ENCODE measurements at regions of chr6 and their contacts with region 1.

Region 1: GRCh38 chr6:31619805-31620585 is 520 bp upstream of the PRRC2A start:
- DNase-seq: peak; percentile 96
- ATAC-seq: peak; percentile 89
- H3K4me3 ChIP-seq: peak overlapping the region; percentile 70
- H3K27ac ChIP-seq: peak overlapping the region; percentile 98
- H3K4me1 ChIP-seq: peaks cover 21% of the 10 kb centered on the region
- H3K27me3 ChIP-seq: no peaks in the 10 kb centered on the region
- CTCF ChIP-seq: no peak
- EP300 ChIP-seq: peak in 1 of 2 experiments; percentile 35; a peak in 1 of 4 replicates
- POLR2A ChIP-seq: peak; percentile 92
- RAD21 ChIP-seq: no peak

Region 2: DNA sequence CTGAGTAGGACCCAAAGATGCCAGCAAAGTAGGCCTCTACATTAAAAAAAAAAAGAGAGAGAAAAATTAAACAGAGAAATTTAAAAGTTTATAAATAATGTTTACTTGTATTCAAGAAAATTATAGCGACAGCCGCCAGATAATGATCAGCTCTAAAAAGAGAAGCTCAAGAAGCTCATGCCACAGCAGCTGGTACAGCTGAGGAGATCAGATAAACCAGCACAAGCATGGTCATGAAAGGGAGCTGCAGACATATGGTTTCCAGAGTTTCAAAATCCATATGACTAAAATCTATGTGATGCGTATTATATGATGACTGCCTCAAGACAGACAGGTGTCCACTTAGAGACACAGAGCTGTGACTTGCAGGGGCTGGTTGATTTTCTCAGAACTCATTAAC is 334.5 kb before region 1 on chr6:
- CTCF ChIA-PET with region 1: no interaction called
- POLR2A ChIA-PET with region 1: no interaction called
- RAD21 ChIA-PET with region 1: no interaction called
- SMC1A ChIA-PET with region 1: no interaction called
- in situ Hi-C with region 1: no loop called
- intact Hi-C with region 1: no loop called
- DNase-seq: no peak
- ATAC-seq: no peak
- H3K4me3 ChIP-seq: no peak overlapping the region
- H3K27ac ChIP-seq: no peak overlapping the region
- H3K4me1 ChIP-seq: no peaks in the 10 kb centered on the region
- H3K27me3 ChIP-seq: no peaks in the 10 kb centered on the region
- CTCF ChIP-seq: no peak
- EP300 ChIP-seq: no peak
- POLR2A ChIP-seq: no peak
- RAD21 ChIP-seq: no peak

Region 3: GRCh38 chr6:31446481-31446880 is 173.5 kb before region 1 on chr6:
- CTCF ChIA-PET with region 1: no interaction called
- POLR2A ChIA-PET with region 1: no interaction called
- RAD21 ChIA-PET with region 1: no interaction called
- SMC1A ChIA-PET with region 1: no interaction called
- in situ Hi-C with region 1: no loop called
- intact Hi-C with region 1: no loop called
- DNase-seq: no peak
- ATAC-seq: no peak
- H3K4me3 ChIP-seq: no peak overlapping the region
- H3K27ac ChIP-seq: no peak overlapping the region
- H3K4me1 ChIP-seq: no peaks in the 10 kb centered on the region
- H3K27me3 ChIP-seq: no peaks in the 10 kb centered on the region; a peak in 1 of 4 replicates
- CTCF ChIP-seq: no peak
- EP300 ChIP-seq: no peak
- POLR2A ChIP-seq: no peak
- RAD21 ChIP-seq: no peak

Region 4: DNA sequence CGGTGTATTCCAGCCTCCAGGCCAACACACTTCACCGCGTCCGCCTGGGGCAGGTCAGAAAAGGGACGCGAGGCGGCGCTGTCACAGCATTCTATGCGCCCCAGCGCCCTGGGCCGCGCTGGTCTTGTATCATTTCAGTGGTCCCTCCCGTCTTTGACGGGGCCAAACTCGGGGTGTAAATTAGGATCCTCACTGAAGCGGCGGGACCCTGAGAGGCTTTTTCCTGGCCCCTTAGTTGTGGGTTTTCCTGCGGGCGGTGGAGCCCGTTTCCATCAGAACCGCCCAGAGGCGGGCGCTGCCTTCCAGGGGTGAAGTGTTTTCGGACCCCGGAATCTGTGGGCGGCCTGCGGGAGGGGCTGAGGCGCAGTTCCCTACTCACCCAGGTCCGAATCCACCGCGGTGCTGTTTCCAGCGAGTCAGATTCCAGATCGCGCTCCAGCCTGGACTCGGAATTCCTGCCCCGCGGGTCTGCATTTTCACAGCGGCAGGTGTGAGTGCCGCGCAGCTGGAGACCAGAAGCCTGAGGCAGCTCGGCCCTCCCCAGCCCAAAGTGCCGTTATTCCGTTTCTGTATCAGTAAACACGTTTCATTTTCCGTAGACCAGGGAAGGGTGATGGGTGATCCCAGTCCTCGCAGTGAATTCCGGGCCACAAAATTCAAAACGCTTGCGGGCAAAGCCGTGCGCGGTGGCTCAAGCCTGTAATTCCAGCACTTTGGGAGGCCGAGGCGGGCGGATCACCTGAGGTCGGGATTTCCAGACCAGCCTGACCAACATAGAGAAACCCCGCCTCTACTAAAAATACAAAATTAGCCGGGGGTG is 125.9 kb before region 1 on chr6:
- CTCF ChIA-PET with region 1: no interaction called
- POLR2A ChIA-PET with region 1: interaction called, 5 read pairs
- RAD21 ChIA-PET with region 1: no interaction called
- SMC1A ChIA-PET with region 1: no interaction called
- in situ Hi-C with region 1: no loop called
- intact Hi-C with region 1: loop called (anchors 5 kb)
- DNase-seq: peak; percentile 34
- ATAC-seq: peak; percentile 73
- H3K4me3 ChIP-seq: peak overlapping the region; percentile 76
- H3K27ac ChIP-seq: peak overlapping the region; percentile 65
- H3K4me1 ChIP-seq: 0 out of 2 replicates have a peak, but pooled peaks cover 2% of the 10 kb centered on the region
- H3K27me3 ChIP-seq: no peaks in the 10 kb centered on the region
- CTCF ChIP-seq: peak; percentile 72 to 94 (median 85)
- EP300 ChIP-seq: no peak
- POLR2A ChIP-seq: 0 out of 2 replicates have a peak, but pooled peaks have one; percentile 23
- RAD21 ChIP-seq: peak; percentile 72

Region 5: GRCh38 chr6:31575335-31575901 is 44.6 kb before region 1 on chr6 and contains the start of gene TNF:
- CTCF ChIA-PET with region 1: interaction called, 5 read pairs
- POLR2A ChIA-PET with region 1: interaction called, 10 read pairs
- RAD21 ChIA-PET with region 1: interaction called, 5 read pairs
- SMC1A ChIA-PET with region 1: interaction called, 5 read pairs
- in situ Hi-C with region 1: no loop called
- intact Hi-C with region 1: no loop called
- DNase-seq: peak; percentile 91
- ATAC-seq: peak; percentile 44
- H3K4me3 ChIP-seq: peak within 1 kb of the TSS; percentile 91
- H3K27ac ChIP-seq: peak within 1 kb of the TSS; percentile 96
- H3K4me1 ChIP-seq: peaks cover 57% of the 10 kb centered on the region
- H3K27me3 ChIP-seq: no peaks in the 10 kb centered on the region
- CTCF ChIP-seq: no peak
- EP300 ChIP-seq: no peak
- POLR2A ChIP-seq: peak; percentile 99
- RAD21 ChIP-seq: 0 out of 2 replicates have a peak, but pooled peaks have one; percentile 12
- polyA plus RNA-seq, gene TNF: 18.0 to 30.2 TPM

Region 6: GRCh38 chr6:31588871-31589650 is 30.9 kb before region 1 on chr6:
- CTCF ChIA-PET with region 1: interaction called, 3 read pairs
- POLR2A ChIA-PET with region 1: interaction called, 19 read pairs
- RAD21 ChIA-PET with region 1: no interaction called
- SMC1A ChIA-PET with region 1: interaction called, 6 read pairs
- in situ Hi-C with region 1: no loop called
- intact Hi-C with region 1: no loop called
- DNase-seq: no peak
- ATAC-seq: no peak
- H3K4me3 ChIP-seq: no peak overlapping the region
- H3K27ac ChIP-seq: no peak overlapping the region; the same call in 1 of the 2 replicates
- H3K4me1 ChIP-seq: peaks cover 55% of the 10 kb centered on the region
- H3K27me3 ChIP-seq: no peaks in the 10 kb centered on the region
- CTCF ChIP-seq: no peak
- EP300 ChIP-seq: no peak
- POLR2A ChIP-seq: no peak
- RAD21 ChIP-seq: no peak

Region 7: GRCh38 chr6:31652925-31653718 is 33.1 kb after region 1 on chr6:
- CTCF ChIA-PET with region 1: interaction called, 7 read pairs
- POLR2A ChIA-PET with region 1: interaction called, 58 read pairs
- RAD21 ChIA-PET with region 1: interaction called, 11 read pairs
- SMC1A ChIA-PET with region 1: interaction called, 15 read pairs
- in situ Hi-C with region 1: no loop called
- intact Hi-C with region 1: loop called (anchors 1 kb)
- DNase-seq: no peak
- ATAC-seq: peak; percentile 84
- H3K4me3 ChIP-seq: peak overlapping the region; percentile 91
- H3K27ac ChIP-seq: peak overlapping the region; percentile 99
- H3K4me1 ChIP-seq: peaks cover 8% of the 10 kb centered on the region; the same call in 1 of the 2 replicates
- H3K27me3 ChIP-seq: no peaks in the 10 kb centered on the region
- CTCF ChIP-seq: peak in 1 of 3 experiments; percentile 29; a peak in 2 of 6 replicates
- EP300 ChIP-seq: no peak
- POLR2A ChIP-seq: no peak
- RAD21 ChIP-seq: no peak

Region 8: GRCh38 chr6:31660381-31661261 is 40.6 kb after region 1 on chr6 and contains the start of gene C6orf47:
- CTCF ChIA-PET with region 1: no interaction called
- POLR2A ChIA-PET with region 1: interaction called, 58 read pairs
- RAD21 ChIA-PET with region 1: interaction called, 3 read pairs
- SMC1A ChIA-PET with region 1: interaction called, 9 read pairs
- in situ Hi-C with region 1: no loop called
- intact Hi-C with region 1: loop called (anchors 1 kb)
- DNase-seq: no peak
- ATAC-seq: peak; percentile 86
- H3K4me3 ChIP-seq: peak within 1 kb of the TSS; percentile 79
- H3K27ac ChIP-seq: peak within 1 kb of the TSS; percentile 94
- H3K4me1 ChIP-seq: peaks cover 42% of the 10 kb centered on the region
- H3K27me3 ChIP-seq: no peaks in the 10 kb centered on the region
- CTCF ChIP-seq: no peak
- EP300 ChIP-seq: no peak
- POLR2A ChIP-seq: peak; percentile 90
- RAD21 ChIP-seq: no peak
- polyA plus RNA-seq, gene C6orf47: 0.16 TPM in 1 of 2 experiments, not detected in the other

Region 9: DNA sequence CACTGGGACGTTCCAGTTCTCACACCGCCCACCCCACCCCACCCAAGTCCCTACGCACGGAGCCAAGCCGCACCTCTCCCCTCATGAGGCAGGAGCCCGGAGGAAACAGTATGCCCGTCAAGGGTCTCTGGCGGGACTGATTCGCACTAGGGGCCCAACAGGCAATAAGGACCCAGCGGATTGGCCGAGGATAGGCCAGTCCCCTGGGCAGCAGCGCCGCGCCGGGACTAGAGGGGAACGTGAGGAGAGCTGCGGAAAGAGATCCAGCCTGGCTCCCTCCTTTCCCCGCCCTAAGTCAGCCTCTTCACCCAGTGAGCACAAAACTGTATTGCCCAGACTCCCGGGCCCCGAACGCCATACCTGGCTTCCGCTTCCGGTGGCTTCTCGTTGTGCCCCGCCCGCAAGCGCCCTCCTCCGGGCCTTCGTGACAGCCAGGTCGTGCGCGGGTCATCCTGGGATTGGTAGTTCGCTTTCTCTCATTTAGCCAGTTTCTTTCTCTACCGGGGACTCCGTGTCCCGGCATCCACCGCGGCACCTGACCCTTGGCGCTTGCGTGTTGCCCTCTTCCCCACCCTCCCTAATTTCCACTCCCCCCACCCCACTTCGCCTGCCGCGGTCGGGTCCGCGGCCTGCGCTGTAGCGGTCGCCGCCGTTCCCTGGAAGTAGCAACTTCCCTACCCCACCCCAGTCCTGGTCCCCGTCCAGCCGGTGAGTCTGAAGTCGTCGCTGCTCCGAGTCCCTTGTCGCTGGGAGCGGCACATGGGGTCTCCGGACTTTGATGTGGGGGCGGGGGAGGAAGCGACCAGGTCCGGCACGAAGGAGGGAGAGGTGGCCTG is 45.7 kb after region 1 on chr6 and contains the start of gene CSNK2B:
- CTCF ChIA-PET with region 1: no interaction called
- POLR2A ChIA-PET with region 1: interaction called, 22 read pairs
- RAD21 ChIA-PET with region 1: interaction called, 3 read pairs
- SMC1A ChIA-PET with region 1: interaction called, 9 read pairs
- in situ Hi-C with region 1: no loop called
- intact Hi-C with region 1: loop called (anchors 1 kb)
- DNase-seq: peak; percentile 91
- ATAC-seq: peak; percentile 89
- H3K4me3 ChIP-seq: peak within 1 kb of the TSS; percentile 93
- H3K27ac ChIP-seq: peak within 1 kb of the TSS; percentile 94
- H3K4me1 ChIP-seq: peaks cover 37% of the 10 kb centered on the region
- H3K27me3 ChIP-seq: no peaks in the 10 kb centered on the region
- CTCF ChIP-seq: no peak
- EP300 ChIP-seq: no peak
- POLR2A ChIP-seq: peak; percentile 93
- RAD21 ChIP-seq: no peak
- polyA plus RNA-seq, gene CSNK2B: 286 to 361 TPM

Region 10: GRCh38 chr6:31717499-31718222 is 97.7 kb after region 1 on chr6:
- CTCF ChIA-PET with region 1: no interaction called
- POLR2A ChIA-PET with region 1: no interaction called
- RAD21 ChIA-PET with region 1: no interaction called
- SMC1A ChIA-PET with region 1: no interaction called
- in situ Hi-C with region 1: no loop called
- intact Hi-C with region 1: no loop called
- DNase-seq: no peak
- ATAC-seq: peak; percentile 39; the same call in 1 of the 3 replicates
- H3K4me3 ChIP-seq: no peak overlapping the region
- H3K27ac ChIP-seq: no peak overlapping the region
- H3K4me1 ChIP-seq: no peaks in the 10 kb centered on the region
- H3K27me3 ChIP-seq: peaks cover 0 to 2% of the 10 kb centered on the region in 2 experiments; a peak in 2 of 4 replicates
- CTCF ChIP-seq: no peak
- EP300 ChIP-seq: no peak
- POLR2A ChIP-seq: no peak
- RAD21 ChIP-seq: no peak

Region 11: GRCh38 chr6:33061987-33062386 is 1442.0 kb after region 1 on chr6:
- CTCF ChIA-PET with region 1: no interaction called
- POLR2A ChIA-PET with region 1: no interaction called
- RAD21 ChIA-PET with region 1: no interaction called
- SMC1A ChIA-PET with region 1: no interaction called
- in situ Hi-C with region 1: no loop called
- intact Hi-C with region 1: no loop called
- DNase-seq: peak; percentile 62
- ATAC-seq: peak; percentile 94
- H3K4me3 ChIP-seq: no peak overlapping the region
- H3K27ac ChIP-seq: peak overlapping the region; percentile 66
- H3K4me1 ChIP-seq: peaks cover 13% of the 10 kb centered on the region
- H3K27me3 ChIP-seq: no peaks in the 10 kb centered on the region
- CTCF ChIP-seq: no peak
- EP300 ChIP-seq: peak in 1 of 2 experiments; percentile 46; a peak in 1 of 4 replicates
- POLR2A ChIP-seq: no peak
- RAD21 ChIP-seq: no peak

Measured in GM12878 (cell line).